ENCODE measurements at regions of chrX and their contacts with region 1.

Region 1: GRCh38 chrX:37825209-37825842 is 22.0 kb downstream of the DYNLT3 start:
- DNase-seq: peak; percentile 9 to 69 (median 49)
- ATAC-seq: peak; percentile 83
- H3K4me3 ChIP-seq: no peak overlapping the region
- H3K4me3 Mint-ChIP-seq: peak overlapping the region in 3 of 10 donors; percentile 6 to 14 (median 14)
- H3K27ac ChIP-seq: no peak overlapping the region
- H3K27ac Mint-ChIP-seq: no peak overlapping the region
- H3K4me1 ChIP-seq: peaks cover 9 to 10% of the 10 kb centered on the region in 2 donors
- H3K4me1 Mint-ChIP-seq: peaks cover 11 to 29% (median 20%) of the 10 kb centered on the region in 7 donors
- H3K27me3 ChIP-seq: no peaks in the 10 kb centered on the region
- H3K27me3 Mint-ChIP-seq: no peaks in the 10 kb centered on the region

Region 2: GRCh38 chrX:37491686-37492085 is 333.6 kb before region 1 on chrX:
- CTCF ChIA-PET with region 1: no interaction called
- POLR2A ChIA-PET with region 1: no interaction called
- intact Hi-C with region 1: loop called in 1 of 2 experiments (anchors 5 kb)
- DNase-seq: no peak
- ATAC-seq: no peak
- H3K4me3 ChIP-seq: no peak overlapping the region
- H3K4me3 Mint-ChIP-seq: no peak overlapping the region
- H3K27ac ChIP-seq: no peak overlapping the region
- H3K27ac Mint-ChIP-seq: no peak overlapping the region
- H3K4me1 ChIP-seq: no peaks in the 10 kb centered on the region
- H3K4me1 Mint-ChIP-seq: no peaks in the 10 kb centered on the region
- H3K27me3 ChIP-seq: no peaks in the 10 kb centered on the region
- H3K27me3 Mint-ChIP-seq: peaks cover 0 to 3% (median 0%) of the 10 kb centered on the region in 5 donors

Region 3: DNA sequence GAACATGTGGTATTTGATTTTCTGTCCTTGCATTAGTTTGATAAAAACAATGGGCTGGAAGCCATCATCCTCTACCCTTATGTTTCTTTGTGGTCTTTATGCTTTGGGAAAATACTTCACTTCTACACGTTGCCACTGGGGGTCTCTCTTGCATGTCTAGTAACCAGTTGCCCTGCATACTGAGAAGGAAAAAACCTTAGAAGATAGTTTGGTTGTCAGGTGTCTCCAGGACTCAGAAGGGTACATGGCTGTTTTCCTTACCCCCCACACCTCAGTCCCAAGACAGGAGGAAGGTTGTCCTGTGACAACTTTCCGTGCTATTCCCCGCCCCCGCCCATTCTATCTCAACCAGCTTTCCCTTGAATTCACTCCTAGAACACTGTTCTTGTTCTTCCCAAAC is 316.0 kb before region 1 on chrX:
- CTCF ChIA-PET with region 1: no interaction called
- POLR2A ChIA-PET with region 1: no interaction called
- intact Hi-C with region 1: loop called in 1 of 2 experiments (anchors 5 kb)
- DNase-seq: no peak
- ATAC-seq: no peak
- H3K4me3 ChIP-seq: no peak overlapping the region
- H3K4me3 Mint-ChIP-seq: no peak overlapping the region
- H3K27ac ChIP-seq: no peak overlapping the region
- H3K27ac Mint-ChIP-seq: no peak overlapping the region
- H3K4me1 ChIP-seq: no peaks in the 10 kb centered on the region
- H3K4me1 Mint-ChIP-seq: no peaks in the 10 kb centered on the region
- H3K27me3 ChIP-seq: no peaks in the 10 kb centered on the region
- H3K27me3 Mint-ChIP-seq: peaks cover 0 to 13% (median 0%) of the 10 kb centered on the region in 5 donors

Region 4: DNA sequence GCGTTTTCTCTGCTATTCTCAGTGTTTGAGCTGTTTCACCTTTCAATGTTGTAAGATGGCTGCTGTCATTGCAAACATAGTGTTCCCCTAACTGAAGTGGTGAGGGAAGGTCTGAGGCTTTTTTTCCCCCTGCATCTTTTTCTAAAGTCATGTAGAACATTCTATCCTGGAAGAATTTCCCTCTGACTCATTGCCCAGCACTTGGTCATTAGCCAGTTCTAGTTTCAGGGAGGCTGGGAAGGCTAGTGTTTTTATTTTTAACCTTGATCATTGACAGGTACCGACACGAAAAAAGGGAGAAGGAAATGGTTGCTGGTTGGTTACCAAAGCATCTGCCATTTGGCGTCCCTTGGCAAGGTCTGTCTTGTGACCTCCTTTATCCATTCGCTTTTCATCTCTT is 247.3 kb before region 1 on chrX:
- CTCF ChIA-PET with region 1: no interaction called
- POLR2A ChIA-PET with region 1: no interaction called
- intact Hi-C with region 1: loop called in 1 of 2 experiments (anchors 10 kb)
- DNase-seq: no peak
- ATAC-seq: no peak
- H3K4me3 ChIP-seq: no peak overlapping the region
- H3K4me3 Mint-ChIP-seq: no peak overlapping the region
- H3K27ac ChIP-seq: no peak overlapping the region
- H3K27ac Mint-ChIP-seq: no peak overlapping the region
- H3K4me1 ChIP-seq: no peaks in the 10 kb centered on the region
- H3K4me1 Mint-ChIP-seq: peaks cover 0 to 8% (median 0%) of the 10 kb centered on the region in 7 donors
- H3K27me3 ChIP-seq: no peaks in the 10 kb centered on the region
- H3K27me3 Mint-ChIP-seq: peaks cover 3 to 21% (median 14%) of the 10 kb centered on the region in 5 donors

Region 5: GRCh38 chrX:37745354-37745753 is 80.0 kb before region 1 on chrX:
- CTCF ChIA-PET with region 1: interaction called, 125 read pairs
- POLR2A ChIA-PET with region 1: interaction called, 8 read pairs
- intact Hi-C with region 1: loop called (anchors 1 kb)
- DNase-seq: peak; percentile 48 to 76 (median 64)
- ATAC-seq: peak; percentile 89
- H3K4me3 ChIP-seq: no peak overlapping the region
- H3K4me3 Mint-ChIP-seq: peak overlapping the region in 1 of 10 donors; percentile 9
- H3K27ac ChIP-seq: no peak overlapping the region
- H3K27ac Mint-ChIP-seq: peak overlapping the region in 2 of 9 donors; percentile 49 to 63
- H3K4me1 ChIP-seq: peaks cover 6 to 7% of the 10 kb centered on the region in 2 donors
- H3K4me1 Mint-ChIP-seq: peaks cover 8 to 21% (median 11%) of the 10 kb centered on the region in 7 donors
- H3K27me3 ChIP-seq: no peaks in the 10 kb centered on the region
- H3K27me3 Mint-ChIP-seq: peaks cover 0 to 18% (median 0%) of the 10 kb centered on the region in 5 donors

Region 6: DNA sequence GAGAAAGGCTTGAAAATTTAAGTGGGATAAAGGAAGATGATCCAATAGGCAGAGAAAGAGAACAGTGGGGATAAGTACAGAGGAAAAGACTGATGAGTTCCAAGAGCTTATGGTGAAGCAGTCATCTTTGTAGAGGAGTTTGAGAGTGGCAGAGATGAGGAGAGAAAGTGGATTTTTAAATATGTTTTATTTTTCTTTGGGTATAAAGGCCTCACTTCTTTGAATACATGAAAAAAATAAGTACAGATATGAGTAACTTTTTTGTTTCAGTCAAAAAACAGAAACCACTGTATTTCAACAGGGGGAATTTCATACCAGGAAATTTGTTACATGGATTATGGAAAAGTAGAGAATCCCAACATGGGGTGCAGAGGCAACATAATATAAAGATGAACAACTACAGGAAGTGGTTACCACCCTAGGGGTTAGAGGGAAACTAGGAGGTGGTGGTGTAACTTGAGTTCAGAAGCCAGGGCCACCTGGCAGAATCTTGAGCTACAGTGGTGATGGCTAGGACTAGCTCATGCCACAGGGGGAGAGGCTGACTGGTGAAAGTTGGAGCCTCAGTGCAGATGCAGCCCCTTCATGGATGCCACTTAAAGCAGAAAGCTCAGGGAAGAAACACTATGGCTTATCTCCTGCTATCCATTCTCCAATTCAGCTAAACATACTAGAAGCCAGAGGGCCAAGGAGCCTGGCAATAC is 48.9 kb before region 1 on chrX:
- CTCF ChIA-PET with region 1: interaction called, 3 read pairs
- POLR2A ChIA-PET with region 1: no interaction called
- intact Hi-C with region 1: loop called in 1 of 2 experiments (anchors 5 kb)
- DNase-seq: no peak
- ATAC-seq: peak; percentile 45
- H3K4me3 ChIP-seq: no peak overlapping the region
- H3K4me3 Mint-ChIP-seq: peak overlapping the region in 9 of 10 donors; percentile 26 to 67 (median 59)
- H3K27ac ChIP-seq: no peak overlapping the region
- H3K27ac Mint-ChIP-seq: peak overlapping the region; percentile 30 to 89 (median 70)
- H3K4me1 ChIP-seq: peaks cover 12 to 20% of the 10 kb centered on the region in 2 donors
- H3K4me1 Mint-ChIP-seq: peaks cover 7 to 26% (median 24%) of the 10 kb centered on the region in 7 donors
- H3K27me3 ChIP-seq: no peaks in the 10 kb centered on the region
- H3K27me3 Mint-ChIP-seq: no peaks in the 10 kb centered on the region

Region 7: GRCh38 chrX:37942170-37942569 is 116.8 kb after region 1 on chrX:
- CTCF ChIA-PET with region 1: no interaction called
- POLR2A ChIA-PET with region 1: no interaction called
- intact Hi-C with region 1: no loop called
- DNase-seq: no peak
- ATAC-seq: no peak
- H3K4me3 ChIP-seq: no peak overlapping the region
- H3K4me3 Mint-ChIP-seq: no peak overlapping the region
- H3K27ac ChIP-seq: no peak overlapping the region
- H3K27ac Mint-ChIP-seq: no peak overlapping the region
- H3K4me1 ChIP-seq: no peaks in the 10 kb centered on the region
- H3K4me1 Mint-ChIP-seq: no peaks in the 10 kb centered on the region
- H3K27me3 ChIP-seq: no peaks in the 10 kb centered on the region
- H3K27me3 Mint-ChIP-seq: peaks cover 0 to 5% (median under 1%) of the 10 kb centered on the region in 5 donors